H1 (cell line): ENCODE measurements at regions of chr2 and their contacts with region 1.

Region 1: DNA sequence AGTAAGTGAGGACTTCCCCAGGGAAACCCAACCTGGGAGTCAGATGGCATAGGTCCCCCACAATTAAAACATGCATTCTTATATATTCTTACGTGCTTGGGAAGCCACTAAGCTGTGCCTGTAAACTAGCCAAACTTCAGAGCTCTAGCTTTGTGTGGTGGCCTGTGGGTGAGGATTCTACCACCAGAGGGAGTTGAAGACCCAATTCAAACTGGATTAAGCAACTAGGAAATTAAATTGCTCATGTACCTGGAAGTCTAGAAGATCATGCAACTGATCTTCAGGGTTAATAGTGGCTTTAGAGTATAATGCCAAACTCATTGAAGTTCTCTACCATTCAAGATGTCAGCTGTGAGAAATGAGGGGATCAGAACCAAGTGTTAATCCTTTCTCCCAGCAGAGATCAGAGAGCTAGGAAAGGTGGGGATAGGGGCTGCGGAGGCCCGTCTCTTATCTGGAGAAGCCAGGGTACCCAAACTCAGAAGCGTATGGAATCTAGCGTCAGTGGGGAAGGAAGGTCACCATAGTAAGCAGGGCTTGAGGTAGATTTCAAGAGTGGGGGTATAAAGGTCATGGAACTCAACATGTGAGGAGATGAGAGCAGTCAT is 53.2 kb upstream of the CCDC85A start:
- DNase-seq: no peak
- H3K4me3 ChIP-seq: no peak overlapping the region
- H3K27ac ChIP-seq: no peak overlapping the region
- H3K4me1 ChIP-seq: peaks cover 0 to 9% (median 2%) of the 10 kb centered on the region in 4 experiments; a peak in 3 of 7 replicates
- H3K27me3 ChIP-seq: peaks cover 0 to 1% (median 0%) of the 10 kb centered on the region in 4 experiments; a peak in 1 of 7 replicates
- CTCF ChIP-seq: peak in 2 of 3 experiments; percentile 68 to 71; a peak in 3 of 4 replicates
- EP300 ChIP-seq: no peak
- POLR2A ChIP-seq: no peak
- RAD21 ChIP-seq: peak; percentile 42 to 56

Region 2: GRCh38 chr2:56077352-56077915 is 53.1 kb before region 1 on chr2:
- CTCF ChIA-PET with region 1: interaction called, 21 read pairs
- POLR2A ChIA-PET with region 1: interaction called, 4 read pairs
- DNase-seq: peak; percentile 34 to 65
- H3K4me3 ChIP-seq: no peak overlapping the region
- H3K27ac ChIP-seq: no peak overlapping the region
- H3K4me1 ChIP-seq: no peaks in the 10 kb centered on the region
- H3K27me3 ChIP-seq: no peaks in the 10 kb centered on the region
- CTCF ChIP-seq: peak in 2 of 3 experiments; percentile 63 to 77; a peak in 3 of 4 replicates
- EP300 ChIP-seq: no peak
- POLR2A ChIP-seq: no peak
- RAD21 ChIP-seq: peak; percentile 72 to 73

Region 3: DNA sequence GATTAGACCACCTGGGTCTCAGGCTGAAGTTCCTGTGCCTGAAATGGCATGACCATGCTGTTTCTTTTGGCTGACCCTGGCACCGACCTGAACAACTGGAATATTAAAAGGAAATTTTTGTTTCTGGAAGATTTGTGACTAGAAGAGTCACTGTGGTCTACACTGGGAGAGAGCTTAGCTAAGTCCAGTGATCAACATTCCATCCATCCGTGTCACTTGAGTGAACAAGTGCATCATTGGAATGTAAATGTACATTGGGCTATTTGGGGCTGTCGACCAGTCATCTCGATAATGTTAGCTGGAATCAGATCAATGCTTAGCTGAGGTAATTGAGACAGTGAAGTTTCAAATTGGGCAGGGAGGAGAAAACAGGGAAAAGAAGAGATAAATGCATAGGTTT is 42.2 kb before region 1 on chr2:
- CTCF ChIA-PET with region 1: interaction called, 11 read pairs
- POLR2A ChIA-PET with region 1: no interaction called
- DNase-seq: no peak
- H3K4me3 ChIP-seq: no peak overlapping the region
- H3K27ac ChIP-seq: no peak overlapping the region
- H3K4me1 ChIP-seq: no peaks in the 10 kb centered on the region
- H3K27me3 ChIP-seq: no peaks in the 10 kb centered on the region
- CTCF ChIP-seq: no peak
- EP300 ChIP-seq: no peak
- POLR2A ChIP-seq: no peak
- RAD21 ChIP-seq: no peak

Region 4: DNA sequence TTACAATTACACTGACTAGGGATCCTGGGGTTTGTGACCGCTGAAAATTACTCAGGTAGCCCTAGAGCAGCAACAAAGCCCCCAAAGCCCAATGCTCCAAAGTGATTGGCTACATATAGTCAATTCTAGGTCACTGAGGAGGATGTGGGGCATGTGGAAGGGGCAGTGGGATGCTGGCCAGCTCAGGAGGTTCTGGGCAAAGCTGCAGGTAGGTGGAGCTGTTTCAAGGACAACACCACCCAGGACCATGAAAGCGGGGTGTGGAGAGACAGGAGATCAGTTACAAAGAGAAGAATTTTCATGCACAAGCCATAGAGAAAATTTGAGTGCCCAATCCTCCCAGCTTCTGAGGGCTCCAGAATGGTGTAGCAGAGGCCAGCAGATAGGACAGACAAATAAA is 21.8 kb before region 1 on chr2:
- CTCF ChIA-PET with region 1: interaction called, 17 read pairs
- POLR2A ChIA-PET with region 1: no interaction called
- DNase-seq: no peak
- H3K4me3 ChIP-seq: no peak overlapping the region
- H3K27ac ChIP-seq: no peak overlapping the region
- H3K4me1 ChIP-seq: peaks cover 0 to 5% (median 2%) of the 10 kb centered on the region in 4 experiments; a peak in 2 of 7 replicates
- H3K27me3 ChIP-seq: no peaks in the 10 kb centered on the region
- CTCF ChIP-seq: peak; percentile 13 to 43 (median 41); a peak in 3 of 4 replicates
- EP300 ChIP-seq: no peak
- POLR2A ChIP-seq: no peak
- RAD21 ChIP-seq: 0 out of 4 replicates have a peak, but pooled peaks of 1 of the 2 experiments have one; percentile 11

Region 5: DNA sequence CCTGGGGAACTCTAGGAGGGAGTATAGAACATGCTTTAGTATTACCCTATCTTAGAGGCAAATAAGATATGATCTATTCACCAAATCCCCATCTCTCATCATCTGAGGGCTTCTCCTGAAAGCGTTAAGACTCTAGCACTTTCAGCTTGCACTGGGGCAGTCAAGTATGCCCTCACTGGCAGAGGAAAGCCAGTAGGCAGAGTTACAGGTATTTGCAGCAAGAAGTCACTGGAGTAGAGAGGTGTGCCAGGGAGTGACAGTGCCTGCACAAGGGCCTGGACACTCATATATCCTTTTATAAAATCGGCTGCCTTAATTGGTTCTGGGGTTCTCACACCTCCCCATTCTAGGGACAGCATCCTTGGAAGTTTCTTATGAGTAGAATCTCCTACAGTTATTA is 21.3 kb after region 1 on chr2:
- CTCF ChIA-PET with region 1: no interaction called
- POLR2A ChIA-PET with region 1: no interaction called
- DNase-seq: no peak
- H3K4me3 ChIP-seq: no peak overlapping the region
- H3K27ac ChIP-seq: no peak overlapping the region
- H3K4me1 ChIP-seq: no peaks in the 10 kb centered on the region
- H3K27me3 ChIP-seq: no peaks in the 10 kb centered on the region
- CTCF ChIP-seq: no peak
- EP300 ChIP-seq: no peak
- POLR2A ChIP-seq: no peak
- RAD21 ChIP-seq: no peak

Region 6: DNA sequence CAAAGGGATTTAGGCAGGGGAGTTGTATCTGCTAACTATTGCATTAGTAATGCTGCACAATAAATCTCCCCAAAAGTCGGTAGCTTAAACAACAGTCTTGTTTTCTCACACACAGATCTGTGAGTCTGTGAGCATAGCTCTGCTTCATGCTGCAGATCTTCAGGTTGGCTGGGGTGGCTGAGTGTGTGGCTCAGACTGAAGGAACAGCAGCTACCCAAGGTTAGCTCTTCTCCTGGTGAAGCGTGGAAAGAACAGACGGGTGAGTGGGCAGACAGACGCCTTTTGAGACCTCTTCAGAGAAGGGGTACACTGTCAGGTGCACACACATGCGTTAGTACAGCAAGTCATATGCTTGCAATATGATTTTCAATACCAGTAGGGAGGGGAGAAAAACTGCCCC is 49.4 kb after region 1 on chr2:
- CTCF ChIA-PET with region 1: interaction called, 11 read pairs
- POLR2A ChIA-PET with region 1: no interaction called
- DNase-seq: no peak
- H3K4me3 ChIP-seq: no peak overlapping the region
- H3K27ac ChIP-seq: no peak overlapping the region
- H3K4me1 ChIP-seq: peaks cover 0 to 10% (median 1%) of the 10 kb centered on the region in 4 experiments
- H3K27me3 ChIP-seq: peaks cover 50 to 81% (median 74%) of the 10 kb centered on the region in 4 experiments
- CTCF ChIP-seq: no peak
- EP300 ChIP-seq: no peak
- POLR2A ChIP-seq: no peak
- RAD21 ChIP-seq: no peak